CD8-positive, alpha-beta T cell (primary cell): ENCODE measurements at regions of chr22 and their contacts with region 1.

Region 1: GRCh38 chr22:38872172-38872830 is at the start of gene CBX6:
- DNase-seq: peak; percentile 90 to 98 (median 96)
- ATAC-seq: peak; percentile 70
- H3K4me3 ChIP-seq: peak within 1 kb of the TSS; percentile 91 to 98
- H3K4me3 Mint-ChIP-seq: peak within 1 kb of the TSS; percentile 89
- H3K27ac ChIP-seq: peak within 1 kb of the TSS; percentile 62 to 65
- H3K27ac Mint-ChIP-seq: peak within 1 kb of the TSS; percentile 81
- H3K4me1 ChIP-seq: peaks cover 41% of the 10 kb centered on the region
- H3K4me1 Mint-ChIP-seq: peaks cover 44% of the 10 kb centered on the region
- H3K27me3 ChIP-seq: no peaks in the 10 kb centered on the region
- H3K27me3 Mint-ChIP-seq: no peaks in the 10 kb centered on the region
- CTCF ChIP-seq: no peak
- total RNA-seq, gene CBX6: 36.0 to 39.5 TPM

Region 2: GRCh38 chr22:38317122-38317994 is 554.9 kb before region 1 on chr22 and contains the start of gene CSNK1E:
- CTCF ChIA-PET with region 1: no interaction called
- POLR2A ChIA-PET with region 1: no interaction called
- intact Hi-C with region 1: loop called in 1 of 2 experiments (anchors 2 kb)
- DNase-seq: peak; percentile 39 to 85 (median 73)
- ATAC-seq: peak; percentile 61
- H3K4me3 ChIP-seq: peak within 1 kb of the TSS; percentile 59 to 60
- H3K4me3 Mint-ChIP-seq: peak within 1 kb of the TSS; percentile 88
- H3K27ac ChIP-seq: peak within 1 kb of the TSS; percentile 80 to 89
- H3K27ac Mint-ChIP-seq: peak within 1 kb of the TSS; percentile 96
- H3K4me1 ChIP-seq: peaks cover 43% of the 10 kb centered on the region
- H3K4me1 Mint-ChIP-seq: peaks cover 45% of the 10 kb centered on the region
- H3K27me3 ChIP-seq: no peaks in the 10 kb centered on the region
- H3K27me3 Mint-ChIP-seq: no peaks in the 10 kb centered on the region
- CTCF ChIP-seq: no peak
- total RNA-seq, gene CSNK1E: 172 to 178 TPM

Region 3: GRCh38 chr22:38705235-38706100 is 166.8 kb before region 1 on chr22 and contains the start of gene GTPBP1:
- CTCF ChIA-PET with region 1: interaction called, 11 read pairs
- POLR2A ChIA-PET with region 1: interaction called, 3 read pairs
- intact Hi-C with region 1: loop called in 1 of 2 experiments (anchors 1 kb)
- DNase-seq: peak; percentile 91 to 100 (median 95)
- ATAC-seq: peak; percentile 76
- H3K4me3 ChIP-seq: peak within 1 kb of the TSS; percentile 63 to 84
- H3K4me3 Mint-ChIP-seq: peak within 1 kb of the TSS; percentile 93
- H3K27ac ChIP-seq: peak within 1 kb of the TSS; percentile 69 to 77
- H3K27ac Mint-ChIP-seq: peak within 1 kb of the TSS; percentile 95
- H3K4me1 ChIP-seq: peaks cover 47% of the 10 kb centered on the region
- H3K4me1 Mint-ChIP-seq: peaks cover 64% of the 10 kb centered on the region
- H3K27me3 ChIP-seq: no peaks in the 10 kb centered on the region
- H3K27me3 Mint-ChIP-seq: no peaks in the 10 kb centered on the region
- CTCF ChIP-seq: no peak
- total RNA-seq, gene GTPBP1: 341 to 346 TPM

Region 4: GRCh38 chr22:38766076-38766777 is 106.1 kb before region 1 on chr22:
- CTCF ChIA-PET with region 1: interaction called, 15 read pairs
- POLR2A ChIA-PET with region 1: interaction called, 3 read pairs
- intact Hi-C with region 1: no loop called
- DNase-seq: peak in 7 of 9 experiments; percentile 34 to 74 (median 55)
- ATAC-seq: peak; percentile 63
- H3K4me3 ChIP-seq: no peak overlapping the region
- H3K4me3 Mint-ChIP-seq: no peak overlapping the region
- H3K27ac ChIP-seq: no peak overlapping the region
- H3K27ac Mint-ChIP-seq: no peak overlapping the region
- H3K4me1 ChIP-seq: peaks cover 6% of the 10 kb centered on the region
- H3K4me1 Mint-ChIP-seq: peaks cover 11% of the 10 kb centered on the region
- H3K27me3 ChIP-seq: no peaks in the 10 kb centered on the region
- H3K27me3 Mint-ChIP-seq: no peaks in the 10 kb centered on the region
- CTCF ChIP-seq: peak; percentile 54

Region 5: GRCh38 chr22:38941488-38941987 is 69.2 kb after region 1 on chr22:
- CTCF ChIA-PET with region 1: no interaction called
- POLR2A ChIA-PET with region 1: no interaction called
- intact Hi-C with region 1: no loop called
- DNase-seq: peak in 1 of 9 experiments; percentile 53
- ATAC-seq: peak; percentile 34
- H3K4me3 ChIP-seq: peak overlapping the region in 1 of 2 experiments; percentile 36
- H3K4me3 Mint-ChIP-seq: peak overlapping the region; percentile 75
- H3K27ac ChIP-seq: no peak overlapping the region
- H3K27ac Mint-ChIP-seq: no peak overlapping the region
- H3K4me1 ChIP-seq: peaks cover 13% of the 10 kb centered on the region
- H3K4me1 Mint-ChIP-seq: peaks cover 20% of the 10 kb centered on the region
- H3K27me3 ChIP-seq: peaks cover 8 to 10% of the 10 kb centered on the region in 2 experiments
- H3K27me3 Mint-ChIP-seq: peaks cover 53% of the 10 kb centered on the region
- CTCF ChIP-seq: no peak

Region 6: GRCh38 chr22:38989466-38989865 is 117.2 kb after region 1 on chr22:
- CTCF ChIA-PET with region 1: interaction called, 7 read pairs
- POLR2A ChIA-PET with region 1: no interaction called
- intact Hi-C with region 1: loop called (anchors 5 kb)
- DNase-seq: peak in 2 of 9 experiments; percentile 44 to 45
- ATAC-seq: no peak
- H3K4me3 ChIP-seq: no peak overlapping the region
- H3K4me3 Mint-ChIP-seq: no peak overlapping the region
- H3K27ac ChIP-seq: no peak overlapping the region
- H3K27ac Mint-ChIP-seq: no peak overlapping the region
- H3K4me1 ChIP-seq: peaks cover 8% of the 10 kb centered on the region
- H3K4me1 Mint-ChIP-seq: peaks cover 33% of the 10 kb centered on the region
- H3K27me3 ChIP-seq: no peaks in the 10 kb centered on the region
- H3K27me3 Mint-ChIP-seq: peaks cover 3% of the 10 kb centered on the region
- CTCF ChIP-seq: no peak

Region 7: GRCh38 chr22:39117585-39118191 is 245.4 kb after region 1 on chr22:
- CTCF ChIA-PET with region 1: interaction called, 10 read pairs
- POLR2A ChIA-PET with region 1: no interaction called
- intact Hi-C with region 1: loop called in 1 of 2 experiments (anchors 1 kb)
- DNase-seq: peak; percentile 49 to 93 (median 74)
- ATAC-seq: peak; percentile 51
- H3K4me3 ChIP-seq: peak overlapping the region in 1 of 2 experiments; percentile 15
- H3K4me3 Mint-ChIP-seq: peak overlapping the region; percentile 45
- H3K27ac ChIP-seq: peak overlapping the region; percentile 54 to 93
- H3K27ac Mint-ChIP-seq: peak overlapping the region; percentile 84
- H3K4me1 ChIP-seq: peaks cover 14% of the 10 kb centered on the region
- H3K4me1 Mint-ChIP-seq: peaks cover 38% of the 10 kb centered on the region
- H3K27me3 ChIP-seq: no peaks in the 10 kb centered on the region
- H3K27me3 Mint-ChIP-seq: no peaks in the 10 kb centered on the region
- CTCF ChIP-seq: peak; percentile 54

Region 8: DNA sequence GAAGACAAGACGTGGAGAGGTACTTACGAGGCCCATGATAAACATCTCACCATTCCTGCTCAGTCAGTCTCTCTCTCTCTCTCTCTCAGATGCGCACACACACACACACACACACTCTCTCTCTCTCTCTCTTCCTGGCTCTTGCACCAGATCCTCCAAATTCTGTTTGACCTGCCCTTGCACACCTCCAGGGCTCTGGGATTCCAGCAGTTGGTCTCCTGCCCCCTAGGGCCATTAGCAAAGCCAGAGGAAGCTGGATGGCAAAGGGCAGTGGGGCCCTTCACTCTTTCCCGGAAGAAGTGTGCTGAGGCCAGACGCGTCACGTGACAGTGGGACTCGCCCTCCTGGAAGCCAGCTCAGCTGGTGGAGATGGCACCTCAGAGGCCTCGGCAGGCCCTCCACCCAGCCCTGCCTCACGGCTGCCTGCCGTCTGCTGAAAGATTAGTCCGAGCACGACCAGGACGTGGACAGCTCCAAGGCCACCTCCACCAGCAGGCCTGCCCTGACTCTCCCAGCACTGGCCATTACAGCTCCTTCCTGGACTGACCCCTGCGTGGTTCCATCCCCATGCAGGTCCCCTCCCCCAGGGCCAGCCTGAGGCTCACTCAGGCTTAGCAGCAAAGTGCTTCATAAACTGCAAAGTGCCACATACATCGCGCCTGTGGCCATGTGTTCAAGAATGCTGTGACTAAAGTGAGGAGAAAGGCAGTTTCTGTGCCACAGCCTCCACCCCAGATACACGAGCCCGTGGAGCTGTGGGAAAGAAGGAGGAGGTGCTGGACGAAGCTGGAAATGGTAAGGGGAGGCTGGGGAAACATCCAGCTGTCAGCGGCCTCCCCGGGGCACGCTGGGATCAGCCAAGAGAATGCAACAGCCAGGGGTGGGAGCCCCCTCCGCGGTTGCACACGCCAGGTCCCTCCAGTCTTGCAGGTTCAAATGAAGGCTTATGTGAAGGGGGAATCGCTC is 368.8 kb after region 1 on chr22:
- CTCF ChIA-PET with region 1: no interaction called
- POLR2A ChIA-PET with region 1: no interaction called
- intact Hi-C with region 1: loop called (anchors 1 to 2 kb)
- DNase-seq: peak in 6 of 9 experiments; percentile 14 to 76 (median 60)
- ATAC-seq: peak; percentile 9
- H3K4me3 ChIP-seq: peak overlapping the region; percentile 17 to 44
- H3K4me3 Mint-ChIP-seq: peak overlapping the region; percentile 93
- H3K27ac ChIP-seq: peak overlapping the region; percentile 21 to 54
- H3K27ac Mint-ChIP-seq: peak overlapping the region; percentile 95
- H3K4me1 ChIP-seq: peaks cover 60% of the 10 kb centered on the region
- H3K4me1 Mint-ChIP-seq: peaks cover 65% of the 10 kb centered on the region
- H3K27me3 ChIP-seq: peaks cover 3 to 20% of the 10 kb centered on the region in 2 experiments
- H3K27me3 Mint-ChIP-seq: peaks cover 2% of the 10 kb centered on the region
- CTCF ChIP-seq: no peak